Activated CD4-positive, alpha-beta T cell treated with anti-CD3 and anti-CD28 coated beads, Interleukin-2, amount 10 ng/mL, durations not matched to agents 24 days and 14 days (primary cell): ENCODE measurements at regions of chr10 and their contacts with region 1.

Region 1: DNA sequence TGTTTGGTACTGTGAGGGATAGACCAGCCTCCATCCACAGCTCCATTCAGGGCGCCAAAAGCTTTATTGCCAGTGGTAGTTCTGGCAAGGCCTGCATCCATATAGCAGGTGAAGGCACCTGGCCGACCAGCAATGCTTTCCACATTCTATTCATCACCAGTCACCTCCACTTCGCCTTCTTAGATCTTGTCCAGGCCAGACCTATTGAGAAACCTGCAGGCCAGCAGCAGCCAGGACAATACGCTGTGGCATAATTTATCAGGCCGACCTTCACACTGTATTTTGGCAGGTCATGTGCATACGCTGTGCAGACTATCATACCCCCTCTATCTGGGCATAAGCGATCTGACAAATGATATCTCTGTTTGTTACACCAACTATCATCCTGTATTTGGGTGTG is 15.2 kb upstream of the KNDC1 start:
- DNase-seq: no peak
- H3K4me3 Mint-ChIP-seq: peak overlapping the region; percentile 35
- H3K27ac Mint-ChIP-seq: no peak overlapping the region
- H3K4me1 Mint-ChIP-seq: peaks cover 7% of the 10 kb centered on the region
- H3K27me3 Mint-ChIP-seq: peaks cover 36% of the 10 kb centered on the region

Region 2: GRCh38 chr10:133278577-133279265 is 133.9 kb after region 1 on chr10:
- intact Hi-C with region 1: loop called (anchors 1 kb)
- DNase-seq: peak; percentile 87
- H3K4me3 Mint-ChIP-seq: peak overlapping the region; percentile 79
- H3K27ac Mint-ChIP-seq: peak overlapping the region; percentile 88
- H3K4me1 Mint-ChIP-seq: peaks cover 28% of the 10 kb centered on the region
- H3K27me3 Mint-ChIP-seq: no peaks in the 10 kb centered on the region

Region 3: GRCh38 chr10:133318494-133319127 is 173.8 kb after region 1 on chr10:
- intact Hi-C with region 1: loop called (anchors 2 kb)
- DNase-seq: peak; percentile 93
- H3K4me3 Mint-ChIP-seq: peak overlapping the region; percentile 78
- H3K27ac Mint-ChIP-seq: no peak overlapping the region
- H3K4me1 Mint-ChIP-seq: peaks cover 11% of the 10 kb centered on the region
- H3K27me3 Mint-ChIP-seq: peaks cover 9% of the 10 kb centered on the region

Region 4: GRCh38 chr10:133544506-133544905 is 399.7 kb after region 1 on chr10:
- intact Hi-C with region 1: no loop called
- DNase-seq: no peak
- H3K4me3 Mint-ChIP-seq: no peak overlapping the region
- H3K27ac Mint-ChIP-seq: no peak overlapping the region
- H3K4me1 Mint-ChIP-seq: no peaks in the 10 kb centered on the region
- H3K27me3 Mint-ChIP-seq: peaks cover 2% of the 10 kb centered on the region